B cell (primary cell): ENCODE measurements at regions of chr12 and their contacts with region 1.

Region 1: DNA sequence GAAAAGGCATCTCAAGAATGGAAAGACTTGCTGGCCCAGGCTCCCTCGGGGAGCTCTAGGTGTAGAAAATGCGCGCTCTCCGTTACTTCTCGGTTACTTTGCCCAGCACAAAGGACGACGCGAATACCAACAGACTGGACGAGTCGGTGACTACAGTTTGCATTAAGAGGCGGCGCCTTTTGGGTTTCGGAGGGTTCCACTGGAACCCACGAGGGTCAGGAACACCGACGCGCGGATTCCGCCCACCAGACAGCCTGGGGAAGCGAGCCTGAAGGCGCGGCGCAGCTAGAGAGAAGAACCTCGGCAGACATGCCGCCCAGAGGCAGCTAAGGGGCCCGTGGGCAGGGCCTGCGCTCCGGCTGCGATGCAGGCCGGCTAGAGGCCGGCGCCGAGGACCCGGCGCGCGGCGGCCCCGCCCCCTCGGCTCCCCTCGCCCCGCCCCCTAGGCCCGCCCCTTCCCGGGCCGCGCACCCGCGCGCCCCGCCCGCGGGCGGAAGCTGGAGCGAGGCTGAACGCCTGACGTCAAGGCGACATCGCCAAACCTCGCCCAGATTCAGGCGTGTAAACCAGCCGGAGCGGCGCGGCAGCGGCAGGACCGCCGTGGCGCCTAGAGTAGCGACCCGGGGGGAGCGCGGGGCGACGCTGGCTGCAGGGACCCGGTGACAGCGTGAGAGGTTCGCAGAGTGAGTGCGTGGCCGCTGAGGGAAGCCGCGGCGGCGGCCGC is at the start of gene RAP1B:
- DNase-seq: peak; percentile 93
- ATAC-seq: peak; percentile 86
- H3K4me3 ChIP-seq: peak within 1 kb of the TSS; percentile 61 to 99 (median 90)
- H3K4me3 Mint-ChIP-seq: peak within 1 kb of the TSS; percentile 98
- H3K27ac ChIP-seq: peak within 1 kb of the TSS; percentile 91 to 94
- H3K27ac Mint-ChIP-seq: peak within 1 kb of the TSS; percentile 99
- H3K4me1 ChIP-seq: peaks cover 35 to 40% of the 10 kb centered on the region in 2 donors
- H3K4me1 Mint-ChIP-seq: peaks cover 45% of the 10 kb centered on the region
- H3K27me3 ChIP-seq: no peaks in the 10 kb centered on the region
- H3K27me3 Mint-ChIP-seq: no peaks in the 10 kb centered on the region
- CTCF ChIP-seq: no peak
- total RNA-seq, gene RAP1B: 158 and 159 TPM in 2 replicates

Region 2: GRCh38 chr12:68236421-68237059 is 374.0 kb before region 1 on chr12:
- CTCF ChIA-PET with region 1: no interaction called
- POLR2A ChIA-PET with region 1: no interaction called
- intact Hi-C with region 1: loop called (anchors 2 kb)
- DNase-seq: peak; percentile 74
- ATAC-seq: peak; percentile 71
- H3K4me3 ChIP-seq: peak overlapping the region; percentile 6 to 62 (median 55)
- H3K4me3 Mint-ChIP-seq: peak overlapping the region; percentile 91
- H3K27ac ChIP-seq: peak overlapping the region; percentile 78 to 81
- H3K27ac Mint-ChIP-seq: peak overlapping the region; percentile 91
- H3K4me1 ChIP-seq: peaks cover 28 to 32% of the 10 kb centered on the region in 2 donors
- H3K4me1 Mint-ChIP-seq: peaks cover 33% of the 10 kb centered on the region
- H3K27me3 ChIP-seq: no peaks in the 10 kb centered on the region
- H3K27me3 Mint-ChIP-seq: no peaks in the 10 kb centered on the region
- CTCF ChIP-seq: no peak

Region 3: GRCh38 chr12:68451261-68452077 is 159.1 kb before region 1 on chr12:
- CTCF ChIA-PET with region 1: interaction called, 3 read pairs
- POLR2A ChIA-PET with region 1: no interaction called
- intact Hi-C with region 1: loop called (anchors 2 kb)
- DNase-seq: peak; percentile 46
- ATAC-seq: peak; percentile 64
- H3K4me3 ChIP-seq: peak overlapping the region; percentile 9 to 53 (median 41)
- H3K4me3 Mint-ChIP-seq: peak overlapping the region; percentile 83
- H3K27ac ChIP-seq: peak overlapping the region; percentile 72 to 73
- H3K27ac Mint-ChIP-seq: peak overlapping the region; percentile 90
- H3K4me1 ChIP-seq: peaks cover 78 to 88% of the 10 kb centered on the region in 2 donors
- H3K4me1 Mint-ChIP-seq: peaks cover 91% of the 10 kb centered on the region
- H3K27me3 ChIP-seq: no peaks in the 10 kb centered on the region
- H3K27me3 Mint-ChIP-seq: no peaks in the 10 kb centered on the region
- CTCF ChIP-seq: no peak

Region 4: DNA sequence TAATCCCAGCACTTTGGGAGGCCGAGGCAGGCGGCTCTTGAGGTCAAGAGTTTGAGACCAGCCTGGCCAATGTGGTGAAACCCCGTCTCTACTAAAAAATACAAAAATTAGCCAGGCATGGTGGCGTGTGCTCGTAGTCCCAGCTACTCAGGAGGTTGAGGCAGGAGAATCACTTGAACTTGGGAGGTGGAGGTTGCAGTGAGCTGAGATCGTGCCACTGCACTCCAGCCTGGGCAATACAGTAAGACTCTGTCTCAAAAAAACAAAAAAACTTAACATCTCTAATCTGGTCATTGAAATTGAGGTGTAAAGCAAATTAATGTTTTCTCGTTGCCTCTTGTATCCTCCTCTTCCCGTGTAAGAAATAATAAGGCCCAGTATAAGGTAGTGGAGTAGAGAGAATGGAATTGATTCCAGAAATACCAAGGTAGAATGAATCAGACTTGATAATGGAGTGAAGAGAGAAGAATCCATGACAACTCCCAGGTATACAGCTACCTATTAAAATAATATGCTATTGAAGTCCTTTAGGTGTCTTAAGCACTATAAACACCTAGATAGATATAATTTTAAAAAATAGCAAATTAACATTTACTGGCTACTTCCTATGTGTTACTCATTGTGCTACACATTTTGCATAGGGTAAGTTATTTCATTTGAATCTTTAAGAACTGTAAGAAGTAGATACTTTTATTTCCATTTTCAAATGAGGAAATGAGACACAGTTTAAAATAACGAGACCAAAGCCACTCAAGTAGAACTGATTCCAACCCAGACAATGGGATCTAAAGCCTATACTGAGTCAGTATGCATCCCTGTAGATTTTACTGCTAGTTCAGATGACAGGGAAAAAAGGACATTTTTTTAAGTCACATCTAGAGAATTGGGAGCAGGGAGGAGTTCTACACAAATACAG is 23.3 kb after region 1 on chr12:
- CTCF ChIA-PET with region 1: interaction called, 4 read pairs
- POLR2A ChIA-PET with region 1: interaction called, 5 read pairs
- intact Hi-C with region 1: loop called (anchors 2 kb)
- DNase-seq: peak; percentile 55
- ATAC-seq: peak; percentile 59
- H3K4me3 ChIP-seq: peak overlapping the region in 1 of 5 experiments; percentile 28
- H3K4me3 Mint-ChIP-seq: peak overlapping the region; percentile 62
- H3K27ac ChIP-seq: peak overlapping the region; percentile 37 to 59
- H3K27ac Mint-ChIP-seq: peak overlapping the region; percentile 62
- H3K4me1 ChIP-seq: peaks cover 63 to 77% of the 10 kb centered on the region in 2 donors
- H3K4me1 Mint-ChIP-seq: peaks cover 84% of the 10 kb centered on the region
- H3K27me3 ChIP-seq: no peaks in the 10 kb centered on the region
- H3K27me3 Mint-ChIP-seq: no peaks in the 10 kb centered on the region
- CTCF ChIP-seq: no peak

Region 5: GRCh38 chr12:68745904-68746571 is 135.5 kb after region 1 on chr12 and contains the start of gene SLC35E3:
- CTCF ChIA-PET with region 1: no interaction called
- POLR2A ChIA-PET with region 1: no interaction called
- intact Hi-C with region 1: loop called (anchors 1 kb)
- DNase-seq: peak; percentile 93
- ATAC-seq: peak; percentile 97
- H3K4me3 ChIP-seq: peak within 1 kb of the TSS; percentile 75 to 96 (median 89)
- H3K4me3 Mint-ChIP-seq: peak within 1 kb of the TSS; percentile 97
- H3K27ac ChIP-seq: peak within 1 kb of the TSS; percentile 71 to 89
- H3K27ac Mint-ChIP-seq: peak within 1 kb of the TSS; percentile 95
- H3K4me1 ChIP-seq: peaks cover 21 to 26% of the 10 kb centered on the region in 2 donors
- H3K4me1 Mint-ChIP-seq: peaks cover 53% of the 10 kb centered on the region
- H3K27me3 ChIP-seq: no peaks in the 10 kb centered on the region
- H3K27me3 Mint-ChIP-seq: no peaks in the 10 kb centered on the region
- CTCF ChIP-seq: no peak
- total RNA-seq, gene SLC35E3: 15.1 TPM in 2 replicates

Region 6: DNA sequence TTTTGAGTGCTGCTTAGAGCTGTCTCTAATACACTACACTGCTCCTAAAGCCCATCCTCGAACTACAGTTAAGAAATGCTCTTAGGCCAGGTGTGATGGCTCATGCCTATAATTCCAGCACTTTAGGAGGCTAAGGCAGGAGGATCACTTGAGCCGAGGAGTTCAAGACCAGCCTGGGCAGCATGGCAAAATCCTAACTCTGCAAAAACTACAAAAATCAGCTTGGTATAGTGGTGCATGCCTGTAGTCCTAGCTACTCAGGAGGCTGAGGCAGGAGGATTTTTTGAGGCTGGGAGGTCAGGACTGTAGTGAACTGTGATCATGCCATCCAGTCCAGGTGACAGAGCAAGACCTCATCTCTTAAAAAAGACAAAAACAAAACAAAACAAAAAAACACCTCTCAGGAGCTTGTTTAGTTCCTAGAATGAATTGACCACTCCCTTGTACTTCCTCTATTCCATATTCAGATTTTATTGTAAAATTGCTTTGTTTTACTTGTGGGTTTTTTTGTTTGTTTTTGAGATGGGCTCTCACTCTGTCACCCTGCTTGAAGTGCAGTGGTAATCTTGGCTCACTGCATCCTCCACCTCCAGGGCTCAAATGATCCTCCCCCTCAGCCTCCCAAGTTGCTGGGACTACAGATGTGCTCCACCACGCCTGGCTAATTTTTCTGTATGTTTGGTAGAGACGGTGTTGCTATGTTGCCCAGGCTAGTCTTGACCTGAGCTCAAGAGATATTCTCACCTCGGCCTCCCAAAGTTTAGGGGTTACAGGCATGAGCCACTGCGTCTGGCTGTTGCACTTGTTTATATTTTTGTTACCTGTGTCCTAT is 211.0 kb after region 1 on chr12:
- CTCF ChIA-PET with region 1: no interaction called
- POLR2A ChIA-PET with region 1: no interaction called
- intact Hi-C with region 1: no loop called
- DNase-seq: no peak
- ATAC-seq: no peak
- H3K4me3 ChIP-seq: no peak overlapping the region
- H3K4me3 Mint-ChIP-seq: no peak overlapping the region
- H3K27ac ChIP-seq: peak overlapping the region in 1 of 2 donors; percentile 47
- H3K27ac Mint-ChIP-seq: peak overlapping the region; percentile 56
- H3K4me1 ChIP-seq: peaks cover 0 to 3% of the 10 kb centered on the region in 2 donors
- H3K4me1 Mint-ChIP-seq: peaks cover 12% of the 10 kb centered on the region
- H3K27me3 ChIP-seq: no peaks in the 10 kb centered on the region
- H3K27me3 Mint-ChIP-seq: no peaks in the 10 kb centered on the region
- CTCF ChIP-seq: no peak